ENCODE measurements at regions of chr11 and their contacts with region 1.

Region 1: GRCh38 chr11:73950869-73951710 is at the start of gene DNAJB13:
- DNase-seq: no peak
- ATAC-seq: peak; percentile 96
- H3K4me3 ChIP-seq: no peak within 1 kb of the TSS
- H3K27ac ChIP-seq: no peak within 1 kb of the TSS
- H3K4me1 ChIP-seq: no peaks in the 10 kb centered on the region
- H3K27me3 ChIP-seq: no peaks in the 10 kb centered on the region
- CTCF ChIP-seq: no peak
- total RNA-seq, gene DNAJB13: not detected

Region 2: GRCh38 chr11:74138572-74138971 is 187.5 kb after region 1 on chr11:
- CTCF ChIA-PET with region 1: no interaction called
- POLR2A ChIA-PET with region 1: interaction called, 10 read pairs
- in situ Hi-C with region 1: no loop called
- intact Hi-C with region 1: no loop called
- DNase-seq: peak; percentile 96
- ATAC-seq: peak; percentile 98
- H3K4me3 ChIP-seq: peak overlapping the region in 1 of 2 experiments; percentile 10; a peak in 1 of 4 replicates
- H3K27ac ChIP-seq: peak overlapping the region; percentile 98
- H3K4me1 ChIP-seq: peaks cover 81% of the 10 kb centered on the region
- H3K27me3 ChIP-seq: no peaks in the 10 kb centered on the region
- CTCF ChIP-seq: no peak

Region 3: GRCh38 chr11:74255741-74256369 is 304.8 kb after region 1 on chr11:
- CTCF ChIA-PET with region 1: no interaction called
- POLR2A ChIA-PET with region 1: no interaction called
- in situ Hi-C with region 1: no loop called
- intact Hi-C with region 1: no loop called
- DNase-seq: peak; percentile 71
- ATAC-seq: peak; percentile 76
- H3K4me3 ChIP-seq: no peak overlapping the region
- H3K27ac ChIP-seq: no peak overlapping the region
- H3K4me1 ChIP-seq: no peaks in the 10 kb centered on the region
- H3K27me3 ChIP-seq: no peaks in the 10 kb centered on the region
- CTCF ChIP-seq: peak; percentile 95